RWPE1 (cell line): ENCODE measurements at regions of chr3 and their contacts with region 1.

Region 1: GRCh38 chr3:172333692-172334457 is 114.4 kb downstream of the GHSR start:
- DNase-seq: no peak
- H3K27ac ChIP-seq: peak overlapping the region; percentile 67
- CTCF ChIP-seq: no peak

Region 2: GRCh38 chr3:173055228-173055933 is 721.5 kb after region 1 on chr3:
- CTCF ChIA-PET with region 1: interaction called, 10 read pairs
- POLR2A ChIA-PET with region 1: no interaction called
- DNase-seq: no peak
- H3K27ac ChIP-seq: no peak overlapping the region
- CTCF ChIP-seq: no peak